ENCODE measurements at regions of chr17 and their contacts with region 1.

Region 1: GRCh38 chr17:82121660-82122629 is 23.9 kb upstream of the FASN start:
- DNase-seq: peak in 1 of 10 donors; percentile 31
- ATAC-seq: no peak
- H3K4me3 Mint-ChIP-seq: peak overlapping the region in 9 of 10 donors; percentile 30 to 88 (median 71)
- H3K27ac Mint-ChIP-seq: peak overlapping the region; percentile 83 to 100 (median 98)
- H3K4me1 Mint-ChIP-seq: peaks cover 27 to 80% (median 73%) of the 10 kb centered on the region in 4 donors
- H3K27me3 Mint-ChIP-seq: no peaks in the 10 kb centered on the region

Region 2: DNA sequence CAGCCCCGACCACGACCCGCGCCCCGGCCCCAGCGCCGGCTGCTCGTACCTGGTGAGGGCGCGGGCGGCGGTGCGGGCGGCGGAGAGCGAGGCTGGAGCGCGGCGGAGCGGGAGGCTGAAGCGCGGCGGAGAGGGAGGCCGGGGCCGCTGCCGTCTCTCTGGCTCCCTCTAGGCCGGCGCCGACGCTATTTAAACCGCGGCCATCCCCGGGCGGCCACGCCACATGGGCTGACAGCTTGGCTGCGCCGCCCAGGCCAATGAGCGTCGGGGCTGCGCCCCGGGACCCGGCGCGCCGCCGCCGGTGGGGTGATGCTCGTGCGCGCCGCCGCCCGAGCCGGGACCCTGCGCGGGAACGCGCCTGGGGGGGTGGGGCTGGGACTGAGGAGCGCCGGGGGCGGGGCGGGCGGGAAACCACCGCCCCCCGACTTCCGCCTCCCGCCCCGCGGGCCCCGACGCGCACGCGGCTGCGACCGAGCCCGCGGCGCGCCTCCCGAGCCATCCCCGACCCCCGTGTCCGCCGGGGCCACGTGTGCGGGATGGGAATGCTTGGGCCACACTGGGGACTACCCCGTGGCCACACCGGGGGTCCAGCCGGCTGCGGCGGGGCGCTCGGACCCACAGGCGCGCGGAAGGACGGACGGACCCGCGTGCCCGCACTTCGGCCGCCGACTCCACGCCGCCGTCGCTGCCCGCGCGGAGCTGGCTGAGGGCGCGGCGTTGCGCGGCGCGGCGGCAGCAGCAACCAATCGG is 23.7 kb before region 1 on chr17 and contains the start of gene FASN:
- POLR2A ChIA-PET with region 1: interaction called, 73 read pairs
- DNase-seq: peak; percentile 74 to 93 (median 90)
- ATAC-seq: peak; percentile 74 to 84
- H3K4me3 Mint-ChIP-seq: peak within 1 kb of the TSS; percentile 22 to 82 (median 64)
- H3K27ac Mint-ChIP-seq: peak within 1 kb of the TSS in 5 of 10 donors; percentile 52 to 87 (median 71)
- H3K4me1 Mint-ChIP-seq: peaks cover 2 to 27% (median 12%) of the 10 kb centered on the region in 4 donors
- H3K27me3 Mint-ChIP-seq: no peaks in the 10 kb centered on the region
- polyA plus RNA-seq, gene FASN: 0.33 to 2.4 (median 0.80) TPM

Region 3: DNA sequence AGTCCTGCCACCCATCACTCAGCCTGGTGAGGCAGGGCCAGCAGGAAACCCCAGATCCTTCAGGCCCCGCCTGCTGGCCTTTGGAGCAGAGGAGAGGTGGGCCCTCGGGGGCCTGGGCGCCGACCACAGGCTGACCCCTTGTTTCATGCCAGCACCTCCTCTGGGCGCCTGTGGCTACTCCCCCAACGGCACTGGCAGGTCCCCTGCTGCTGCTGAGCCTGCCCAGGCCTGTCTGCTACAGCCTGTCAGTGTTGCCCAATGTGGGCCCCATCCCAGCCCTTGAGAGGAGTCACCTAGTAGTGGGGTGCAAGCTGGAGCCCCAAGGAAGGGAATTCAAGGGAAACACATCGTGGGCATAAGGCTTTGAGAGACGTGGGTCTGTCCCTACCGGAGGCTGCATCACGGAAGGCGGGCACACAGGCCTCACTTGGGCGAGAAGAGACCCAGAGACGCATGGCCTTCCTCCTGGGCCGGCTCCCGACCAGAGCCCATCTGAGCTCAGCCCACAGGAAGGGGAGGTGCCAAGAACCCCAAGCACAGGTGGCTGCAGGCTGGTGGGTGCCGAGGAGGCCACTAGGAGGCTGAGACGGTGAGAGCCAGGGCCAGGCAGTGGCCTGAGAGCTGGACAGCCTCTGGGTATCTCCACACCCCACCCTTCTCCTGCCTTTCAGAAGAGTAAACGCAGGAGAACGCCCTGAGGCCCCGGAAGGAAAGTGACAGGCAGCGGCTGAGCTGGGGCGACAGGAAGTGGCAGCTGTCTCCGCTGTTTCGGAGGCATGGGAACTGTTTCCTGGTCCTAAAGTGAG is 15.9 kb before region 1 on chr17:
- POLR2A ChIA-PET with region 1: interaction called, 73 read pairs
- DNase-seq: peak; percentile 25 to 75 (median 48)
- ATAC-seq: peak; percentile 77 to 91
- H3K4me3 Mint-ChIP-seq: peak overlapping the region; percentile 81 to 92 (median 88)
- H3K27ac Mint-ChIP-seq: peak overlapping the region; percentile 93 to 98 (median 97)
- H3K4me1 Mint-ChIP-seq: peaks cover 10 to 54% (median 35%) of the 10 kb centered on the region in 4 donors
- H3K27me3 Mint-ChIP-seq: no peaks in the 10 kb centered on the region